ENCODE measurements at regions of chr5 and their contacts with region 1.

Region 1: DNA sequence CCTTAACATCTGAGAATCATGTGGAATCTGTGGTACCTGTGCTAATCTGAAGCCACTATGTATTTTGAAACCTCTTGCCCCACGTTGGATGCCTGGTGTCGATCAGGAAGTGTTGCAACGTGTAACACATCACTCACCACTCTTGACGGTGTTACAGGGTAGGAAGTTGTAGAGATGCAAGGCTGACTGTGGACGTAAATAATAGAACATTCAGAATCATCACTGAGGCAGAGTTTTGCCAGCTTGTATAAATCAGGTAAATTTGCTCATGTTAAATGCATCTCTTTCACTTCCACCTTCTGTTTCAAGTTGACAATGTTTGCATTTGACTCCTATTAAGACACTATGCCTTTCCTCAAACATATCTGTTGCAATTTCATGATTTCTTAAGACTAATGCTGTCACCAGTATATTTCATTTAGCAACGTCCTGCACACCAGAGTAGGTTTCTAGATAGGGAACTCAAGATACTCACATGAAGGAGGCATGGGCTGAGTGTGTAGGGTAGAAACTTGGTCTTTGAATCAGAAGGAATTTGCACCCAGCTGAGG is 38.1 kb downstream of the BASP1 start:
- DNase-seq: no peak
- ATAC-seq: peak; percentile 43
- H3K4me3 Mint-ChIP-seq: peak overlapping the region; percentile 44
- H3K27ac Mint-ChIP-seq: peak overlapping the region; percentile 95
- H3K4me1 Mint-ChIP-seq: peaks cover 93% of the 10 kb centered on the region
- H3K27me3 Mint-ChIP-seq: no peaks in the 10 kb centered on the region
- CTCF ChIP-seq: no peak

Region 2: GRCh38 chr5:17228821-17229291 is 26.7 kb before region 1 on chr5:
- CTCF ChIA-PET with region 1: interaction called, 5 read pairs
- POLR2A ChIA-PET with region 1: interaction called, 77 read pairs
- intact Hi-C with region 1: loop called (anchors 1 kb)
- DNase-seq: no peak
- ATAC-seq: peak; percentile 13
- H3K4me3 Mint-ChIP-seq: peak overlapping the region; percentile 63
- H3K27ac Mint-ChIP-seq: peak overlapping the region; percentile 92
- H3K4me1 Mint-ChIP-seq: peaks cover 92% of the 10 kb centered on the region
- H3K27me3 Mint-ChIP-seq: no peaks in the 10 kb centered on the region
- CTCF ChIP-seq: no peak

Region 3: GRCh38 chr5:17238521-17239041 is 17.0 kb before region 1 on chr5:
- CTCF ChIA-PET with region 1: no interaction called
- POLR2A ChIA-PET with region 1: interaction called, 8 read pairs
- intact Hi-C with region 1: loop called (anchors 1 kb)
- DNase-seq: no peak
- ATAC-seq: no peak
- H3K4me3 Mint-ChIP-seq: no peak overlapping the region
- H3K27ac Mint-ChIP-seq: peak overlapping the region; percentile 1
- H3K4me1 Mint-ChIP-seq: peaks cover 89% of the 10 kb centered on the region
- H3K27me3 Mint-ChIP-seq: no peaks in the 10 kb centered on the region
- CTCF ChIP-seq: no peak

Region 4: GRCh38 chr5:17269201-17269600 is 13.7 kb after region 1 on chr5:
- CTCF ChIA-PET with region 1: interaction called, 5 read pairs
- POLR2A ChIA-PET with region 1: interaction called, 57 read pairs
- intact Hi-C with region 1: loop called (anchors 1 kb)
- DNase-seq: no peak
- ATAC-seq: peak; percentile 73
- H3K4me3 Mint-ChIP-seq: peak overlapping the region; percentile 66
- H3K27ac Mint-ChIP-seq: peak overlapping the region; percentile 87
- H3K4me1 Mint-ChIP-seq: peaks cover 96% of the 10 kb centered on the region
- H3K27me3 Mint-ChIP-seq: no peaks in the 10 kb centered on the region
- CTCF ChIP-seq: no peak

Region 5: DNA sequence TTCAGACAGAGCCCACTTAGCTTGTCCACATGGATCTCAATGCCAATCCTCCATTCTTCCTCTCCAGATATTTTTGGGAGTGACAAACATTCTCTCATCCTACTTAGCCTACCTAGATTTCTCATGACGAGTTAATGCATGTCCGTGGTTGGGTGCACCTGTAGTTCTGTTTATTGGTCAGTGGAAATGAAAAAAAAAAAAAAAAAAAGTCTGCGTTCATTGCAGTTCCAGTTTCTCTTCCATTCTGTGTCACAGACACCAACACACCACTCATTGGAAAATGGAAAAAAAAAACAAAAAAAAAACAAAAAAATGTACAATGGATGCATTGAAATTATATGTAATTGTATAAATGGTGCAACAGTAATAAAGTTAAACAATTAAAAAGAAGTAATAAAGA is 20.9 kb after region 1 on chr5:
- CTCF ChIA-PET with region 1: interaction called, 6 read pairs
- POLR2A ChIA-PET with region 1: interaction called, 84 read pairs
- intact Hi-C with region 1: loop called (anchors 1 kb)
- DNase-seq: no peak
- ATAC-seq: no peak
- H3K4me3 Mint-ChIP-seq: peak overlapping the region; percentile 55
- H3K27ac Mint-ChIP-seq: peak overlapping the region; percentile 94
- H3K4me1 Mint-ChIP-seq: peaks cover 87% of the 10 kb centered on the region
- H3K27me3 Mint-ChIP-seq: no peaks in the 10 kb centered on the region
- CTCF ChIP-seq: no peak

Region 6: GRCh38 chr5:17305964-17306716 is 50.6 kb after region 1 on chr5:
- CTCF ChIA-PET with region 1: no interaction called
- POLR2A ChIA-PET with region 1: no interaction called
- intact Hi-C with region 1: no loop called
- DNase-seq: no peak
- ATAC-seq: no peak
- H3K4me3 Mint-ChIP-seq: no peak overlapping the region
- H3K27ac Mint-ChIP-seq: no peak overlapping the region
- H3K4me1 Mint-ChIP-seq: no peaks in the 10 kb centered on the region
- H3K27me3 Mint-ChIP-seq: no peaks in the 10 kb centered on the region
- CTCF ChIP-seq: no peak

Region 7: DNA sequence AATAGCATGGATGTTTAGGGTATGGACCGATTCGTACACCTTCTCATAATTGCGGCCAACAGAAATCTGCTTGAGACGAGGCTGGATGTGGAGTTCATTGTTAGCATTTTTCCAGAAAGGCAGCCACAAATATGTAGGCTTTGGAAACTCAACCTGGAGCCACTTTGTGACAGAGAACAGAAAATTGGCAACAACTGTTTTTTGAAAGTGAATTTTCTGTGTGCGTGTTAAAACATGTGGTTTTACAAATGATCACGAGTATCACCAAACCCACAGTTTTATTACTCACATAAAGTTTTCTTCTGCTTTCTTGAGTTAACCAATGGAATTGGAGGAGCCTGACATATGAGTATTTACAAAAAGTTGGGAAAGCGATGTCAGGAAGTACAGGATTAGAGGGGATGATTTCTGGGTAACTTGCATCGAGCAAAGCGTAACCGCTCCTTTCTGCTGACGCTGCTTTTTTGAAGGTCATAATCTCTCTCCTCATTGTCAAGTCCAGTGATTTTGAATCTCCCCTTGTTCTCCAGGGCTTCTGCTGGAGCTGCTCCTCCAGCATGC is 104.0 kb after region 1 on chr5:
- CTCF ChIA-PET with region 1: no interaction called
- POLR2A ChIA-PET with region 1: interaction called, 13 read pairs
- intact Hi-C with region 1: loop called (anchors 2 kb)
- DNase-seq: no peak
- ATAC-seq: no peak
- H3K4me3 Mint-ChIP-seq: no peak overlapping the region
- H3K27ac Mint-ChIP-seq: no peak overlapping the region
- H3K4me1 Mint-ChIP-seq: peaks cover 18% of the 10 kb centered on the region
- H3K27me3 Mint-ChIP-seq: no peaks in the 10 kb centered on the region
- CTCF ChIP-seq: no peak

Region 8: DNA sequence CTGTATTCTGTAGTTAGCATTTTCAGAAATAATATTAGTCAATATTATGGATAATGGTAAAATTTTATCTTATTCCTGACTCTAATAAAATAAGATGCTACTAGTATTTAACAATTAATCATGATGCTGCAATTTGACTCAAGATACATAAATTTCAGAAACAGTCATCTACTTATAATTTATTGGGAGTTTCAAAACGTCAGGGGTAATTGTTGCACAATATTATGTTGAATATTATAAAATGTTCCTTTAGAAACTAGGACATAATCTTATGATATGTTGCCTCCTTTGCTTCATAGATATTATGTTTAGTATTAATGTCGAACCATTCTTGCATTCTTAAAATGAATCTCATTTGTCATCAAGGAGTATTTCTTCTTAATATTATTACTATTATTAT is 519.2 kb after region 1 on chr5:
- CTCF ChIA-PET with region 1: no interaction called
- POLR2A ChIA-PET with region 1: no interaction called
- intact Hi-C with region 1: no loop called
- DNase-seq: no peak
- ATAC-seq: no peak
- H3K4me3 Mint-ChIP-seq: no peak overlapping the region
- H3K27ac Mint-ChIP-seq: no peak overlapping the region
- H3K4me1 Mint-ChIP-seq: no peaks in the 10 kb centered on the region
- H3K27me3 Mint-ChIP-seq: no peaks in the 10 kb centered on the region
- CTCF ChIP-seq: no peak